ENCODE measurements at regions of chr6 and their contacts with region 1.

Region 1: GRCh38 chr6:129212081-129212480 is 329.1 kb downstream of the LAMA2 start:
- DNase-seq: no peak
- ATAC-seq: peak in 1 of 8 donors; percentile 13
- H3K4me3 ChIP-seq: no peak overlapping the region
- H3K27ac ChIP-seq: peak overlapping the region in 2 of 10 donors; percentile 7 to 32
- H3K4me1 ChIP-seq: peaks cover 0 to 26% (median 9%) of the 10 kb centered on the region in 9 donors
- H3K27me3 ChIP-seq: no peaks in the 10 kb centered on the region
- CTCF ChIP-seq: no peak

Region 2: DNA sequence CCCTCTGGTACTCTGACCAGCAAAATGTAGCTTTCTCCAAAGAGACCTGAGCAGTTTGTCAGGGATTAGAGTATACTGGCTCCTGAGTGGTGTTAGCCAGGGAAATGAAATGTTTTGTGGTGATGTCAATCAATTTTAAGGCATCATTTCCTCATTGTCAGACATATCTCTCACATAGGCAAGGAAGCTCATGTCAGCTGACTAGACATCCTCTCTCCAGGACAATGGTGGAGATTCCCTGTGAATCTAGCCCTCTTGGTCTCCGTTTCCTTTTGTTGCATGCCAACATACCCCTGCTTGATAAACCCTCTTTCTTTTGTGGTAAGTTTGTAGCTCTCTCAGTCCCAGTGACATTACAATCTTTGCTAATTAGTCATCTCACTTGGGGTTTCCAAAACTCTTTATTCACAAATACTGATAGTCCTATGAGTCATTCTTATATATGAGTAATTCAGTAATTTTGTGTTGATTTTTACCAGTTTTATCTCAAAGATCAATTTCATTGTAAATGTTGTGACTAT is 556.0 kb before region 1 on chr6:
- intact Hi-C with region 1: no loop called
- DNase-seq: no peak
- ATAC-seq: peak in 1 of 8 donors; percentile 47
- H3K4me3 ChIP-seq: no peak overlapping the region
- H3K27ac ChIP-seq: peak overlapping the region in 2 of 10 donors; percentile 22 to 24
- H3K4me1 ChIP-seq: peaks cover 0 to 6% (median 0%) of the 10 kb centered on the region in 9 donors
- H3K27me3 ChIP-seq: no peaks in the 10 kb centered on the region
- CTCF ChIP-seq: no peak

Region 3: DNA sequence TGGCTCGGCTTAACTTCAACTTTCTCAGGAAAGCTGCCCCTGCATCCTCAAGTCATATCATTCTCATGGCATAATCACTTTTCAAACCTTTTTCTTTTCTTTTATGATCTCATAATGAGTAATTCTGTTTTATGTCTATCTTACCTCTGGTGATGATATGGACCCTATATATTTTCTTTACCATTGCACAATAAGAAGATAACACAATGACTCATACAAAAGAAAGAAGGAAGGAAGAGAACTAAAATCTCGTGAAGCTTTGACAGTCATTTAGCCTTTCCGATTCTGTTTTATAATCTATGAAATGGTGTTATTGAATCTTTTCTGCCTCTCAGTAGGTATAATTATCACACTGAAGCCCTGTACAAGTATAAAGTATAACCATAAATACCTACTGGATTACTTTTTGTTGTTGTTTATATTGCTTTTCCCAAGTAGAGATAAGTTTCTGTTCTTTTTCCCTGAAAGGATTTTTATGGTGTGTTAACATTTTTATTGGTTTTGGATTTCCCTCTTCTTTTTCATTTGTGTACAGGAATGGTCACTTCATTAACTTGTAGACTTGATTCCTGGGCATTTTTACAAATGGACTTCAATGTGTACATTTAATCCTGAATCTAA is 28.3 kb before region 1 on chr6:
- intact Hi-C with region 1: loop called in 1 of 10 experiments (anchors 1 kb)
- DNase-seq: no peak
- ATAC-seq: no peak
- H3K4me3 ChIP-seq: no peak overlapping the region
- H3K27ac ChIP-seq: peak overlapping the region in 4 of 10 donors; percentile 22 to 52 (median 42)
- H3K4me1 ChIP-seq: peaks cover 0 to 48% (median 30%) of the 10 kb centered on the region in 9 donors
- H3K27me3 ChIP-seq: no peaks in the 10 kb centered on the region
- CTCF ChIP-seq: no peak

Measured in heart right ventricle (tissue), 16 donors.